ENCODE measurements at regions of chr6 and their contacts with region 1.

Region 1: GRCh38 chr6:142361782-142362750 is 60.3 kb downstream of the ADGRG6 start:
- DNase-seq: peak; percentile 73
- H3K4me3 ChIP-seq: no peak overlapping the region
- H3K27ac ChIP-seq: no peak overlapping the region
- H3K4me1 ChIP-seq: peaks cover 29% of the 10 kb centered on the region
- H3K27me3 ChIP-seq: no peaks in the 10 kb centered on the region
- CTCF ChIP-seq: no peak
- POLR2A ChIP-seq: no peak

Region 2: DNA sequence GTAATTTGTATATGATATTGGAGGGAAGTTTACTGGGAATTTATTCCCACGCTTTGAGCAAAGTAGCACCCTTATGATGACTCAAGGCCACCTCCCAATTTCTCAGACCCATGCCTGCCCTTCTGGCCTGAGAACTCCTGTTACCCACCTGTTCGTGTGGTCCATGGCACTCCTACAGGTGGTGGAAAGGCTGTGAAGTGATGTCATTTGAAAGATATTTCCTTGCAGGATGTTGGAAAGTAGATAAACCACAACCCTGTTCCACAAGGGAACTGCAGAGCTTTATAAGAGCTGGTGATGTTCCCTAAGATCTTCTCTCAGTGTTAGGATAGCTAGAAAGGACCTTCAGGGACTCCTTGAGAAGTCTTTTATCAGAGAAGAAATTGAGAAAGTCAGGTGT is 10.3 kb after region 1 on chr6:
- CTCF ChIA-PET with region 1: interaction called, 7 read pairs
- POLR2A ChIA-PET with region 1: no interaction called
- dilution Hi-C with region 1: no loop called
- intact Hi-C with region 1: loop called (anchors 1 kb)
- DNase-seq: peak; percentile 81
- H3K4me3 ChIP-seq: no peak overlapping the region
- H3K27ac ChIP-seq: peak overlapping the region; percentile 85
- H3K4me1 ChIP-seq: peaks cover 57% of the 10 kb centered on the region
- H3K27me3 ChIP-seq: no peaks in the 10 kb centered on the region
- CTCF ChIP-seq: no peak
- POLR2A ChIP-seq: peak; percentile 26

Region 3: GRCh38 chr6:142510211-142510610 is 148.1 kb after region 1 on chr6:
- CTCF ChIA-PET with region 1: no interaction called
- POLR2A ChIA-PET with region 1: no interaction called
- dilution Hi-C with region 1: no loop called
- intact Hi-C with region 1: no loop called
- DNase-seq: no peak
- H3K4me3 ChIP-seq: no peak overlapping the region
- H3K27ac ChIP-seq: no peak overlapping the region
- H3K4me1 ChIP-seq: no peaks in the 10 kb centered on the region
- H3K27me3 ChIP-seq: peaks cover 5 to 10% of the 10 kb centered on the region in 2 experiments
- CTCF ChIP-seq: no peak
- POLR2A ChIP-seq: no peak